Posterior vena cava (tissue), 2 donors: ENCODE measurements at regions of chr6 and their contacts with region 1.

Region 1: GRCh38 chr6:53786832-53787231 is 8.0 kb upstream of the LRRC1 start:
- DNase-seq: no peak

Region 2: GRCh38 chr6:55319961-55320695 is 1533.3 kb after region 1 on chr6:
- intact Hi-C with region 1: loop called in 1 of 2 experiments (anchors 5 kb)
- DNase-seq: no peak